OCI-LY7 (cell line): ENCODE measurements at regions of chr15 and their contacts with region 1.

Region 1: DNA sequence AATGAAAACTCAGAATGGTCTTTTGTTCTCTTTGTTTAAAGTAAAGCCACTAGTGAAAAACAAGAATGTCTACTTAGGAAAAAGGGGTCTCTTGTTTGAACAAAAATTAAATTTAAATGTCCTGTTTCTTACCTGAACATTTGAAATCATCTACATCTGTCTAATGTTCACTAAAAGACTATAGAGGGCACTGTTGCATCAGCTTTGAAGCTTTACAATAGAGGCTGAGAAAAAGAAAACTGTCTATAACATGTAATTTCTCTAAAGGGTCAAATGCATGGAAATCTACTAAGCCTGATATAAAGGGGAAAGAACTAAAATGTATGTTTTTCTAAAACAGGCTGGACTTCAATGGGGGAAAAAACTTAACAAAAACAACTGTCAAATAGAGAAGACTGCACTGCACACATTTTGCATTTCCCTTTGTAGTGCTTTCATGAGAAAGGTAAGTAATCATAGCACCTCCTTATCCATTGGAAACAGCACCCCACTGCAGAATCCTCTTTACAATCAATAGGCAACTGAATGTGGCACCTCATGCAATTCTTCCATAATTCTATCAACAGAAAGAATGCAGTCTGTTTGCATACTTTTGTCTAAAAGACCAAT is 26.3 kb downstream of the DPH6 start:
- DNase-seq: peak; percentile 55
- H3K4me3 ChIP-seq: no peak overlapping the region
- H3K27ac ChIP-seq: no peak overlapping the region
- H3K4me1 ChIP-seq: no peaks in the 10 kb centered on the region
- CTCF ChIP-seq: peak; percentile 92

Region 2: GRCh38 chr15:35751413-35752133 is 231.9 kb after region 1 on chr15:
- CTCF ChIA-PET with region 1: no interaction called
- POLR2A ChIA-PET with region 1: no interaction called
- intact Hi-C with region 1: loop called (anchors 10 kb)
- DNase-seq: peak; percentile 63
- H3K4me3 ChIP-seq: no peak overlapping the region
- H3K27ac ChIP-seq: no peak overlapping the region
- H3K4me1 ChIP-seq: no peaks in the 10 kb centered on the region
- CTCF ChIP-seq: peak; percentile 88